ENCODE measurements at regions of chr2 and their contacts with region 1.

Region 1: GRCh38 chr2:74206180-74206688 is 7.8 kb downstream of the MTHFD2 start:
- DNase-seq: peak in 8 of 9 donors; percentile 20 to 54 (median 38)
- ATAC-seq: peak; percentile 87
- H3K4me3 ChIP-seq: peak overlapping the region; percentile 53
- H3K4me3 Mint-ChIP-seq: peak overlapping the region; percentile 72 to 90 (median 82)
- H3K27ac ChIP-seq: peak overlapping the region; percentile 63
- H3K27ac Mint-ChIP-seq: peak overlapping the region; percentile 91 to 98 (median 94)
- H3K4me1 ChIP-seq: peaks cover 22 to 32% of the 10 kb centered on the region in 2 donors
- H3K4me1 Mint-ChIP-seq: peaks cover 23 to 79% (median 38%) of the 10 kb centered on the region in 7 donors
- H3K27me3 ChIP-seq: no peaks in the 10 kb centered on the region
- H3K27me3 Mint-ChIP-seq: no peaks in the 10 kb centered on the region

Region 2: DNA sequence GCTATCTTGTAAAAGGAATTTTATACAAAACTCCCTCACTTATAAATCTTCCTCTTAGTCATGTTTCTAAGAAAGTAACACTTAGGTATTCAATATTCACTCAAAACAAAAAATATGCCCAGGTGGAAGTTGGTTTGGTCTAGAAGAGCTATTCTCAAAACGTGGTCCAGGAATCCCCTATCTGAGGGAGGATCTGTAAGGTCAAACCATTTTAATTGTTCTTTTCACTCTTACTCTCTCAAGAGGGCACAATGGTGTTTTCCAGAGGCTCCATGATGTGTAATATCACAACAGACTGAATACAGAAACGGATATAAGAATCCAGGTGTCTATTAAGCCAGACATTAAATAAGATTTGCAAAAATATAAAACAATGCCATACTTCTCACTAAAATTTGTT is 37.5 kb before region 1 on chr2:
- CTCF ChIA-PET with region 1: no interaction called
- POLR2A ChIA-PET with region 1: interaction called, 3 read pairs
- intact Hi-C with region 1: loop called in 1 of 2 experiments (anchors 5 kb)
- DNase-seq: no peak
- ATAC-seq: no peak
- H3K4me3 ChIP-seq: no peak overlapping the region
- H3K4me3 Mint-ChIP-seq: no peak overlapping the region
- H3K27ac ChIP-seq: no peak overlapping the region
- H3K27ac Mint-ChIP-seq: peak overlapping the region in 1 of 9 donors; percentile 23
- H3K4me1 ChIP-seq: peaks cover 0 to 6% of the 10 kb centered on the region in 2 donors
- H3K4me1 Mint-ChIP-seq: peaks cover 5 to 29% (median 23%) of the 10 kb centered on the region in 7 donors
- H3K27me3 ChIP-seq: no peaks in the 10 kb centered on the region
- H3K27me3 Mint-ChIP-seq: no peaks in the 10 kb centered on the region